Aorta (tissue), 5 donors: ENCODE measurements at regions of chr2 and their contacts with region 1.

Region 1: DNA sequence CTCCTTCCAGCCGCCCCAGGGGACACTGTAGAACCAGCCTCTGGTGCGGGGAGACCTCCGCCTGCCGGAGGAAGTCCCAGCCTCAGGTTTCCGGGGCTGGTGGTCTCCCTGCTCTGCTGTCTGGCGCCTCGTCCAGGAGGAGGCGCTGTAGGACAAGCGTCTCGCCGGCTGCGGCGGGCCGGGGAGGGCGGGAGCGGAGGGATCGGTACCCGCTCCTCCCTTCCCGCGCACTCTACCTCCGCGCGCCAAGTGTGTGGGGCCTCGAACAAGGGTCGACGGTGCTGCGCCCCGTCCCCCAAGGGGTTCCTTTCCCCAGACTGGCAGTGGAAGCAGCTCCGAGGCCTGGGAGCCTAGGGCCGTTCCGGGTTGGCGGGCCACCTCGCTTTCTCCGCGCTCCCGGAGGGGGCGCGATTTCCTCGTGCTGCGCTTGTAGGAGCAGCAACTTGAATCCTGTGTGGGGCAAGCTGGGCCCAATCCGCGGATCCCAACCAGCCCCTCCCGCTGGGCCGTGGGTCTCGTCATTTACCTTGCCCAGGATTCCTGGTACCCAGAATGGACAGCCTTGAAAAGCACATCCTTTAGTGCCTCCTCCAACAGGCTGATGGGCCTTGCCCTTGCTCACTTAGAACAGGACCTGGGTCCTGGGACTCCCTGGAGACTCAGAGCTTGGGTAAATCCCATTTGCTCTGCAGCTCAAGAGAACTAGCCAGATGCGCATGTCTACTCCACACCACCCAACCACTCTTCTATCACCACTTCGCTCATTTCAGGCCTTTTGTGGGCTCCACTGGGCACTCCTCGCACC is 10.6 kb upstream of the HOXD4 start:
- DNase-seq: peak; percentile 81 to 93
- ATAC-seq: peak; percentile 93
- H3K4me3 ChIP-seq: peak overlapping the region; percentile 14 to 43
- H3K27ac ChIP-seq: no peak overlapping the region
- H3K4me1 ChIP-seq: no peaks in the 10 kb centered on the region
- H3K27me3 ChIP-seq: no peaks in the 10 kb centered on the region

Region 2: GRCh38 chr2:176269319-176270099 is 128.8 kb after region 1 on chr2 and contains the start of gene MTX2:
- intact Hi-C with region 1: loop called in 1 of 2 experiments (anchors 10 kb)
- DNase-seq: peak; percentile 77 to 90
- ATAC-seq: peak; percentile 97
- H3K4me3 ChIP-seq: peak within 1 kb of the TSS; percentile 44 to 88
- H3K27ac ChIP-seq: peak within 1 kb of the TSS in 1 of 2 donors; percentile 4
- H3K4me1 ChIP-seq: peaks cover 0 to 2% of the 10 kb centered on the region in 2 donors
- H3K27me3 ChIP-seq: peaks cover 0 to 2% of the 10 kb centered on the region in 2 donors
- total RNA-seq, gene MTX2: 18.0 to 18.5 TPM

Region 3: DNA sequence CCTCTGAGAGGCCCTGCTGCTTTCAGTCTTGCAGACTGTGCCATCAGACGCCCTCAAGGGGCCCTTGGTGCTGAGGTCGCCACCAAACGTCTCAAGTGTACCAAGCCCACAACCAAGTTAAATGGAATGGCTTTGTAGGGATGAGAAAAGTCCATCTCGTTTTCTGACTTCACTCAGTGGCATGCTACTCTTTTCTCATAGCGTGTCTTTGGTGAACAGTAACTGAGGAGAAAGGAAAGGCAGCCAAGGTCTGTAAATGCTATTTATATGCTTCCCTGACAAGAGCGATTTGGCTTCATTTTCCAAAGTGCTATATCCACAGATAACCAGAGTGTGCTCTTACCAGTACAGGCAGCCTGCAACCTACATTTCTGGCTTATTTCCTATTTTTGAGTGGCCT is 251.5 kb after region 1 on chr2:
- intact Hi-C with region 1: loop called in 1 of 2 experiments (anchors 5 kb)
- DNase-seq: no peak
- ATAC-seq: peak; percentile 49
- H3K4me3 ChIP-seq: no peak overlapping the region
- H3K27ac ChIP-seq: peak overlapping the region; percentile 11 to 79
- H3K4me1 ChIP-seq: peaks cover 6 to 17% of the 10 kb centered on the region in 2 donors
- H3K27me3 ChIP-seq: no peaks in the 10 kb centered on the region

Region 4: GRCh38 chr2:176454893-176455811 is 314.4 kb after region 1 on chr2:
- intact Hi-C with region 1: loop called (anchors 2 kb)
- DNase-seq: peak; percentile 85 to 95
- ATAC-seq: peak; percentile 91
- H3K4me3 ChIP-seq: no peak overlapping the region
- H3K27ac ChIP-seq: no peak overlapping the region
- H3K4me1 ChIP-seq: no peaks in the 10 kb centered on the region
- H3K27me3 ChIP-seq: no peaks in the 10 kb centered on the region

Region 5: GRCh38 chr2:176554101-176555048 is 413.7 kb after region 1 on chr2:
- intact Hi-C with region 1: loop called (anchors 1 to 5 kb)
- DNase-seq: peak in 1 of 2 donors; percentile 43
- ATAC-seq: peak; percentile 86
- H3K4me3 ChIP-seq: peak overlapping the region; percentile 18 to 44
- H3K27ac ChIP-seq: peak overlapping the region in 1 of 2 donors; percentile 82
- H3K4me1 ChIP-seq: peaks cover 3 to 11% of the 10 kb centered on the region in 2 donors
- H3K27me3 ChIP-seq: no peaks in the 10 kb centered on the region

Region 6: DNA sequence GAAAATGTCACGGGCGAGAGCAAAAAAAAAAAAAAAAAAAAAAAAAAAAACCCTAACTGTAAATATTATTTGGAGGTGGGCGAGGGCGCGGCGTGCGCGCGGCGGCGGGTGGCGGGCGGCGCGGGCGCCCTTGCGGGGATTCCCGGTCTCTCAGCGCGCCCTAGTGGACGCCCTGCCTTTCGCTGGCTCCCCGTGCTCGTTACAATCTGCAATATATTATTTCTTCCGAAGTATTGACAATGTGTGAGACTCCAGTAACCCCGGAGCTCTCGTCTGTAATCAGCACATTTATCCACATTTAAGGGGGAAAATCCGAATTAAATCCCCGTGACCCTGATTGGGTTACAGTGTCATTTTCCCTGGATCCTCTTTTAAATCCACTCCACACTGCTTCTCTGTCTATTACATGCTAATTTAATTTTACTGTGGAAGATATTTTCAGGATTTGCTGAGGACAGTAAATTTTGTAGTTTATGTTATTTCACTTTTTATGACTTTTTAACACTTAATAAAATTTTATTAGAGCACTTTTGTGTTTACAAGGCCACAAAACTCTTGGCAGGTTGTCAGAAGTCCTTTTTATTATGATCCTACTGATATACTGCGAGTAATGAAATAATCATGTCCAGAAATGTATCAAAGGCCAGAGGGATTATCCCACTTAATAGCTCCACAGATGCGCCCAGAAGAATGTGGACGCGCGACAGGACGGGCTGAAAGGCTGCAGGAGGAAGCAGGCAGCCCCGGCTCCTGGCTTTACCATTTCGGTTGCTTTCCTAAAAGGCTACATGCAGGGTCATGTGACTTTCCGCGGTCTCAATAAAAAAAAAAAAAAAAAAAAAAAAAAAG is 497.7 kb after region 1 on chr2:
- intact Hi-C with region 1: loop called (anchors 5 kb)
- DNase-seq: peak; percentile 77 to 94
- ATAC-seq: peak; percentile 94
- H3K4me3 ChIP-seq: peak overlapping the region; percentile 80 to 81
- H3K27ac ChIP-seq: no peak overlapping the region
- H3K4me1 ChIP-seq: no peaks in the 10 kb centered on the region
- H3K27me3 ChIP-seq: no peaks in the 10 kb centered on the region